ENCODE measurements at regions of chr10 and their contacts with region 1.

Region 1: GRCh38 chr10:131786756-131787605 is 113.8 kb upstream of the PPP2R2D start:
- DNase-seq: peak in 5 of 10 donors; percentile 50 to 73 (median 57)

Region 2: DNA sequence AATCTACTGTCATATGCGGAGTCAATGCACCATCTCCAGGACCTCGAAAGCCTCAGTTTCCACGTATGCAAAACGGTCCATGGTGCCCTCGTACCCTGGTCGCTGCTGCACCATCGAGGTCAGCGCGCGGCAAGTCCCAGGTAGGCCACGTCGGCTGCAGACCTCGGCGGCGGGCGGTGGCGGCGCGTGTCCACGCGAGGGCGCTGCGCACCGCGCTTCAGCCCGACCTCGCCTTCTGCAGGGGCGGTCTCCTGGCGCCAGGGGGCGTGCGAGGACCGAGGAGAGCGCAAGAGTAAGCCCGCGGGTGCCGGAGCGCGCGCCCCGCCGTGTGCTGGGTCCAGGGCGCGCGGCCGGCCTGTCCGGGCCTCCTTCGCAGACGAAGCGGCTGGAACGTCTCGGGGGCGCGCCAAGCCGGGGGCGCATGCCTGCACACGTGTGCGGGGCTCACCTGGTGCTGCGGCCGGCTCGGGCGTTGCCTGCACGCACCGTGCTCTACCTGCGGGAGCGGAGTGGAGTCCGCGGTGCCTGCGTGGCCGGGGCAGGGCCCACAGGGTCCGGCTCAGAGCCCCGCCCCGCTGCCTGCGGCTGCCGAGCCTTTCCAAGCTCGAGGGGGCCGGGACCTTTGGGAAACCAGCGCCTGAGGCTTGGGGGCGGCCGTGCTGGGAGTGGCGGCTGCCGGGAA is 1596.8 kb before region 1 on chr10:
- intact Hi-C with region 1: loop called (anchors 2 kb)
- DNase-seq: peak; percentile 72 to 98 (median 86)

Region 3: DNA sequence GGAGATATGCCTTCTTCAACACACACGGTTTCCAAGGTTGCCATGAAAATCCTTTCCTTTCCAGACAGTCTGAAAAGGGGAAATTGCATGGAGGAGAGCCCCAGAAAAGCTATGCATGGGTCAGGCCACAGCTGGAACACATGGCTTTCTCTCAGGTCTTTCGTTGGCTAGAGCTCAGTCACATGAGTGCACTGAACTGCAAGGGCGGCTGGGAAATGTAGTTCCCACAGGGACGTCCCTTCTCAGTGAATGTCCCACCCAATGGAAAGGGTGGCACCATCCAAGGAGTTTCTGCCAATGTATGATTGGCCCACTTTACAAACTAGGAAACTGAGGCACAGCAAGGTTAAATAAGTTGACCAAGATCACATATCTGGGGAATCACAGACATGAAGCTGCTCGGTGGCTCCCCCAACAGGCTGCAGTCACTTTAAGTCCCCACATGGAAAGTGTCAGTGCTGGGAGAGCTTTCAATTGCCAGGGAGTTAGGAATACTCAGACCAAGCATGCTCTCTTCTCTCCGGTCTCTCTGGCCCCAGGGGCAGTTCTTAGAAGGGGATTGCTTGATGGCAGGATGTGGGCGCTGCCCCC is 1079.5 kb before region 1 on chr10:
- intact Hi-C with region 1: no loop called
- DNase-seq: peak in 1 of 10 donors; percentile 43

Region 4: GRCh38 chr10:131359796-131360195 is 427.2 kb before region 1 on chr10:
- intact Hi-C with region 1: loop called (anchors 10 kb)
- DNase-seq: peak in 1 of 10 donors; percentile 71

Region 5: DNA sequence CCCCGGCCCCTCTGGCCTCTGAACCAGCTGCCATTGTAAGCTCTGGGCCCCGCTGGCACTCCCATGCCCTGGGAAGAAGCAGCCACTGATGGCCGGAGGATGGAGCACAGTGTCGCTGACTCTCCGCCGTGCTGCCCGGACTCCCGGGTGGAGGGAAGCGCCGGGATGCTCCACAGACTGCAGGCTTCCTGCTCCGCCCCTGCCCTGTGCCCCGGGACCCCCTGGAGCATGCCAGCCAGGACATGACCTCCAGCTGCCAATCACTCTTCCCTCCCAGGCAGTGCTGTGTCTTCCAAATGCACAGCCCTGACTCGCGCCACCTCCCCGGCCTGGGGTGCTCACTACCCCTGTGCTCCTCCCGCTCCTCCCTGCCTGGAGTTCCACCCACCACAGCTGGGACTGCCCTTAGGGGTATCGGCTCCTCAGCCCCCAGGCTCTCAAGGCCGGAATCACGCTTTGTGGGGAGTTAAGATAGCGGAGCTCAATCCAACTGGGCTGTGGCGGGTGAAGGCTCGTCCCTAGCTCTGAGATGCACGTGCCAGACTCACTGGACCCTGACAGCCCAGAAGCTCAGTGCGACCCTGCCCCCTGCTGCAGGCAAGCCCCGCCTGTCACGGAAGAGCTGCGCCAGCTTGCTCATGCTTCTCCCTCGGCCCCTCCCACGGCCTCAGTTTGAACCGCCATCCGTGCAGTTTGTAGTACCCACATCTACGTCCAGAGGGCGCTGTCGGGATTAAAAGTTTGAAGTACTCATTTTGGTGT is 333.2 kb before region 1 on chr10:
- intact Hi-C with region 1: loop called (anchors 5 kb)
- DNase-seq: peak in 9 of 10 donors; percentile 70 to 97 (median 86)